Transverse colon (tissue), 4 donors: ENCODE measurements at regions of chr14 and their contacts with region 1.

Region 1: GRCh38 chr14:52711666-52712065 is 4.7 kb downstream of the PSMC6 start:
- DNase-seq: no peak
- H3K4me3 ChIP-seq: no peak overlapping the region
- H3K27ac ChIP-seq: no peak overlapping the region
- H3K4me1 ChIP-seq: peaks cover 6 to 19% (median 12%) of the 10 kb centered on the region in 4 donors
- H3K27me3 ChIP-seq: no peaks in the 10 kb centered on the region
- CTCF ChIP-seq: no peak
- EP300 ChIP-seq: no peak
- POLR2A ChIP-seq: no peak

Region 2: GRCh38 chr14:52649511-52649910 is 62.2 kb before region 1 on chr14:
- in situ Hi-C with region 1: no loop called
- intact Hi-C with region 1: loop called (anchors 2 kb)
- DNase-seq: no peak
- H3K4me3 ChIP-seq: no peak overlapping the region
- H3K27ac ChIP-seq: no peak overlapping the region
- H3K4me1 ChIP-seq: no peaks in the 10 kb centered on the region
- H3K27me3 ChIP-seq: no peaks in the 10 kb centered on the region
- CTCF ChIP-seq: no peak
- EP300 ChIP-seq: no peak
- POLR2A ChIP-seq: no peak

Region 3: DNA sequence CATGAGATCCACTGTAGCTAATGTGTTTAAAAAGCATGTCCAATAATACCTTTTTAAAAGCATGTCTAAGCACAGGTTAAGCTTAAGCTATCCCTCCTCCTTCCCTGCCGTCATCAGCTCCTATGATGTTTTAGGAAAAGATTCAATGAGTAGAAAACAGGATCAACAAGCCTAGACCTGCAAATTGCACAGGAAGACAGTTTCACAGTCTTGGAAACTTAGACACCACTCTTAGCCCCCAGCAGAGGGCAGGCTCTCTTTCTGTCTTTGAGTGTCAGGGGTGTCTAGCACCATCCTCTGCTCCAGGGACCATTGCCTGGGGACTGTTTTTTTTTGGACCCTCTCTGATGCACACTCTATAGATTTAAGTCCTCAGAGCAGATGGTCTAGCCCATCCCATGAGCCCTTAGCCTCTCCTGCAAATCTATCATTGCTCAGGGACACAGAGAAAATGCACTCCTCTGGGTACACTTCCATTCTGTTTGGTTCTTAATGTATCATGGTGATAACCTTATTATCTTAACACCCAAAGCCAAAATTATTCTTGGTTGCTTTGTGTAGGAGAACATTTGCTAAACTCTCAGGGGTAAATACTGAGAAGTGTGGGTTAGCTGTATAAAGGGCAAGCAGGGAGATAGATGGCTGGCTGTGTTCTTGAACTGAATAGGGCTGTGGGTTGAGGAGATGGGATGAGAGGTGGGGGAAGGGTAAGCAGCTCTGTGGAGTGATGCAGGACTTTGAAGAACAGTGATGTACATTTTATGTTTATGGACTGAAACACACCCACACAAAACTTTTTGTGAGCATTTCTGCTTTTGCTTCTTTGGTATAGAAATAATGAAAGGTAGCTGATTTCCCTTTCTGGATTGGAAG is 701.4 kb after region 1 on chr14:
- in situ Hi-C with region 1: no loop called
- intact Hi-C with region 1: no loop called
- DNase-seq: no peak
- H3K4me3 ChIP-seq: no peak overlapping the region
- H3K27ac ChIP-seq: no peak overlapping the region
- H3K4me1 ChIP-seq: no peaks in the 10 kb centered on the region
- H3K27me3 ChIP-seq: no peaks in the 10 kb centered on the region
- CTCF ChIP-seq: peak in 1 of 5 experiments; percentile 22
- EP300 ChIP-seq: no peak
- POLR2A ChIP-seq: no peak